Mammary epithelial cell (primary cell): ENCODE measurements at regions of chr11 and their contacts with region 1.

Region 1: GRCh38 chr11:394034-394857 is at the start of gene PKP3:
- DNase-seq: peak; percentile 97
- H3K4me3 ChIP-seq: peak within 1 kb of the TSS; percentile 51 to 75 (median 71)
- H3K27ac ChIP-seq: peak within 1 kb of the TSS; percentile 85
- H3K4me1 ChIP-seq: peaks cover 36% of the 10 kb centered on the region
- H3K27me3 ChIP-seq: no peaks in the 10 kb centered on the region
- CTCF ChIP-seq: no peak
- total RNA-seq, gene PKP3: 248 to 274 TPM

Region 2: DNA sequence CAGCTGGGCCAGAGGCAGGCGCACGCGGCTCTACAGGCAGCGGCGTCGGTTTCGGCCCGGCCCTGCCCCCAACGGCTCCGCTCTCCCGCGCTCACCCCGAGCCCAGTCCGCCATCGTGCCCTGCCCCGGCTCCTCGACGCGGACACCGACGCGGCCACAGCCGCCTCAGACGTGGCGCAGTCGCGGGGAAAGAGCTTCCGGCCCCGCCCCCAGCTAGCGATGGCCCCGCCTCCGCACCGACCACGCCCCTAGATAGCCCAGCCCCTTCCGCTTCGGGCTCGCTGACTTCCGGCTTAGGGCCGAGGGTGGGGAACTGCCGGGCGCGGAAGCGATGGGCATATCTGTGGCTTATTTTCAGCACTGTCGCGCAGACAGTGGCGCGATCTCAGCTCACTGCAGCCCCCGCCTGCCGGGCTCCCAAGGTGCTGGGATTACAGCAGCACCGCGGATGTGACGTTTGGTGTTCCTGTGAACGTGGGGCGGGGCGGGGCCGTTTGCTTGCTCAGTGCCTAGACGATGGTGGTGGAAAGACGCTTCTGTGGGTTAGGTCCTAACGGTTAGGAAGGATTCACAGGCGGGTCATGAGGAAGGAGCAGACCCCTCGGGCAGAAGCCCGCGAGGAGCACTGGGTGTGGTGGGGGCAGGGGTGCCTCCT is 186.9 kb before region 1 on chr11 and contains the starts of genes BET1L and RIC8A:
- CTCF ChIA-PET with region 1: no interaction called
- dilution Hi-C with region 1: no loop called
- in situ Hi-C with region 1: no loop called
- intact Hi-C with region 1: loop called (anchors 1 kb)
- DNase-seq: peak; percentile 98
- H3K4me3 ChIP-seq: peak within 1 kb of the TSS; percentile 68 to 92 (median 74)
- H3K27ac ChIP-seq: peak within 1 kb of the TSS; percentile 90
- H3K4me1 ChIP-seq: peaks cover 22% of the 10 kb centered on the region
- H3K27me3 ChIP-seq: no peaks in the 10 kb centered on the region
- CTCF ChIP-seq: no peak
- total RNA-seq, gene BET1L: 13.5 to 53.8 TPM
- total RNA-seq, gene RIC8A: 112 to 132 TPM

Region 3: GRCh38 chr11:236774-237767 is 157.2 kb before region 1 on chr11 and contains the start of gene PSMD13:
- CTCF ChIA-PET with region 1: no interaction called
- dilution Hi-C with region 1: no loop called
- in situ Hi-C with region 1: no loop called
- intact Hi-C with region 1: loop called (anchors 1 kb)
- DNase-seq: peak; percentile 73
- H3K4me3 ChIP-seq: peak within 1 kb of the TSS; percentile 87 to 98 (median 98)
- H3K27ac ChIP-seq: peak within 1 kb of the TSS; percentile 93
- H3K4me1 ChIP-seq: peaks cover 15% of the 10 kb centered on the region
- H3K27me3 ChIP-seq: no peaks in the 10 kb centered on the region
- CTCF ChIP-seq: no peak
- total RNA-seq, gene PSMD13: 89.5 to 133 TPM

Region 4: DNA sequence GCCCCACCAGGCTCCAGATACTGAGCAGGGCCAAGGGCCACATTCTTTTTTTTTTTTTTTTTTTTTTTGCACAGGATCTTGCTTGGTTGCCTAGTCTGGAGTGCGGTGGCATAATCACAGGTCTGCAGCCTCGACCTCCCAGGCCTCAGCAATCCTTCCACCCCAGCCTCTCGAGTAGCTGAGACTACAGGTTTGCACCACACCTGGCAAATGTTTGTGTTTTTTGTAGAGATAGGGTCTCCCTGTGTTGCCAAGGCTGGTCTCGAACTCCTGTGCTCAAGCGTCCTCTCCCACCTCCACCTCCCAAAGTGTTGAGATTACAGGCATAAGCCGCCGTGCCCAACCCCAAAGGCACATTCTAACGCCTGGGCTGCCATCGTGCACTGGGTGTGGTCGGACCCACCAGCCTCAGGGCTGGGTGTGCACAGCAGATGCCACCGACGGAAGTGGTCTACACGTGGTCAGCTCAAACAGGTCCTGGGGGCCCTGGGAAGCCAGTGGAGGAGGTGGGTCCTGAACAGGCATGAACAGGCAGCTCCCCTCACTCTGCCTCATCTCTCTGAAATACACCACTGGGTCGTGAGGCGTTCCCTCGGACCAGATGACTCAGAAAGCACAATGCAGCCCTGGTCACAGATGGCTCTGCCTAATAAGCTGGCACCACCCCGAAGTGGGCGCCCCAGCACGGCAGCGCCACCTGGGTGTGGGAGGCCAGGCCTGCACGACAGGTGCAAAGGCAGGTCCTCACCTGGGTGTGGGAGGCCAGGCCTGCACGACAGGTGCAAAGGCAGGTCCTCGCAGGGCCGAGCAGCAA is 30.1 kb before region 1 on chr11:
- CTCF ChIA-PET with region 1: no interaction called
- dilution Hi-C with region 1: no loop called
- in situ Hi-C with region 1: no loop called
- intact Hi-C with region 1: loop called (anchors 2 kb)
- DNase-seq: peak; percentile 83
- H3K4me3 ChIP-seq: no peak overlapping the region
- H3K27ac ChIP-seq: no peak overlapping the region
- H3K4me1 ChIP-seq: peaks cover 26% of the 10 kb centered on the region
- H3K27me3 ChIP-seq: peaks cover 5% of the 10 kb centered on the region
- CTCF ChIP-seq: peak; percentile 73 to 82

Region 5: DNA sequence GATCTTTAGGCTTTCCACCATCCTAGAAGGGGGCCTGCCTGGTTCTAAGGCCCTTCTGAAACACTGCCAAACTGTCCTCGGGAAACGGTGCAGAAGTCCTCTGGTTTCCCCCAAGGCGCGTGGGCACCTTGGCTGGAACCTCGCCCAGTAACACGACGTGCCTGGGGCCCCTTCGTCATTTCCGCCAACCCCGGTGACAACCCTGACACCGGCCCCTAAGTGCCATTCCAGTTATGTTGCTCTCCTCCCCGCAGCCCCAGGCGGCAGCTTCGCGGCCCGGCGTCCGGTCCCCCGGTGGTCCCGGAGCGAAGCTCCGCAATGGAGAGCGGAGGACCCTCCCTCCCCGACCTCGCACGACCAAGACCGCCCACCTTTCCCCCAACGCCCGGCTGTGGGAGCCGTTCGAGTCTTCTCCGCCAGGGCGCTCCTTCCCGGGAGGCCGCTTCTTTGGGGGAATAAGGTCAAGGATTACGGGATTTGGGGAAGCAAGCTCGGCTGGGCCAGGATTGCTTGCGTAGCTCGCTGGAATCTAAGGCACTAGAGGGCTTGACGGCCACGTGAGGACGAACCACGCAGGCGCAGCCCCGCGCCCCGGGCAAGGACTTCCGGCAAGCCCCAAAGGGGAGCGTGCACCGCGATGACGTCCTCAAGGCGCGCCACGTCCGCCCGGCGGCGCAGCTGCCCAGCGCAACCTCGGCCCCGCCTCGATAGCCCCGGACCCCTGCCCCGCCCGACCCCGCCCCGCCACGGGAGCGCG is 112.2 kb after region 1 on chr11:
- CTCF ChIA-PET with region 1: no interaction called
- dilution Hi-C with region 1: no loop called
- in situ Hi-C with region 1: no loop called
- intact Hi-C with region 1: loop called (anchors 2 kb)
- DNase-seq: peak; percentile 96
- H3K4me3 ChIP-seq: peak overlapping the region; percentile 84 to 96 (median 92)
- H3K27ac ChIP-seq: peak overlapping the region; percentile 97
- H3K4me1 ChIP-seq: peaks cover 35% of the 10 kb centered on the region
- H3K27me3 ChIP-seq: no peaks in the 10 kb centered on the region
- CTCF ChIP-seq: no peak

Region 6: DNA sequence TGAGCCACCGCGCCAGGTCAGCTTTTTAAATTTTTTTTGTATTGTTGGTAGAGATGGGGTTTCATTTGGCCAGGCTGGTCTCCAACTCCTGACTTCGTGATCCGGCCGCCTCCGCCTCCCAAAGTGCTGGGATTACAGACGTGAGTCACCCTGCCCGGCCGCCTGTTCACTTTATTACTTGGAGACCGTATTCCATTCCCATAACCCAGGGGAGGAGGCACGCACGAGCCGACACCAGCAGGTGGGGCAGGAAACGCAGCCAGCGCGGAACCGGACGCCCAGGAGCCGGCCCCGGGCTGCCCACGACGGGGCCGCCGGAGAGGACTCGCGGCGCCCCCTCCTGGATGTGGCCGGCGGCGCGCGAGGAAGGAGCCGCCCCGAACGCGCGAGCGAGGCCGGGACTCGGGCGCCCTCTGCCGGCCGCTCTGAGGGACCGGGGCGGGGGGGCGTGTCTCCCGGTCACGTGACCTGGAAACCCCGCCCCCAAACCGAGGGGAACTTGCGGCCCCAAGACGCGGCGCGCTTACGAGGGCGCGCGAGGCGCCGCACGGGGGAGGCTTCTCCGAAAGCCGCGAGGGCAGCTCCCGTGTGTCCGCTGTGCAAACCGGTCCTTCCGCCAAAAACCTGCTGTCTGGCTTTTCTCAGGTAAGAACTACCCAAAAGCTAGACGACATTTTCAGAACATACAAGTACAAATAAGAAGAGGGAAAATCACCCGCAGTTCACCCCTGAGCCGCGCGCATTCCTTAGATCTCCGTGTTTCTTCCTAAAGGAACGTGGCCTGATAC is 124.4 kb after region 1 on chr11:
- CTCF ChIA-PET with region 1: no interaction called
- dilution Hi-C with region 1: no loop called
- in situ Hi-C with region 1: no loop called
- intact Hi-C with region 1: loop called (anchors 2 kb)
- DNase-seq: peak; percentile 97
- H3K4me3 ChIP-seq: peak overlapping the region in 1 of 3 experiments; percentile 13
- H3K27ac ChIP-seq: peak overlapping the region; percentile 48
- H3K4me1 ChIP-seq: peaks cover 21% of the 10 kb centered on the region
- H3K27me3 ChIP-seq: no peaks in the 10 kb centered on the region
- CTCF ChIP-seq: peak; percentile 72 to 85